Posterior vena cava (tissue), 2 donors: ENCODE measurements at regions of chr4 and their contacts with region 1.

Region 1: GRCh38 chr4:9971691-9972090 is 49.6 kb downstream of the SLC2A9 start:
- DNase-seq: no peak

Region 2: DNA sequence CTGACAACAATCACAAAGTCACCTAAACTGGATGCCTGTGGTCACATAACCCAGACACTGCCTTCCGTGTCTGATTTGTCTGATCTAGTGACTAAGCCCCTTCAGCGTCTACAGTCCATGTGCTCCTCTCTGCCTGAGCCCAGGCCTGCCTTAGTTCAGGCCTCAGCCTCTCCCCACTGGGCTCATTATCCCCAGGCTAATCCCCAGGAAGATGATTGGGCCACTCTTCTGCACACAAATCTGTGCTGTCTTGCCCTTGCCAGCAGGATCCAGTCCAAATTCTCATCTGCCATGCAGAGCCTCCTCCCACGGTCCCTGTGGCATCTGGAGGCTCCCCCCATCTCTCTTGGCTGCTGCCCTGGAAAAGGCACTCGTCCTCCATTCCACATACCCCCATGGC is 46.9 kb before region 1 on chr4:
- intact Hi-C with region 1: loop called in 1 of 2 experiments (anchors 2 kb)
- DNase-seq: peak; percentile 48